Sigmoid colon (tissue), 7 donors: ENCODE measurements at regions of chr11 and their contacts with region 1.

Region 1: DNA sequence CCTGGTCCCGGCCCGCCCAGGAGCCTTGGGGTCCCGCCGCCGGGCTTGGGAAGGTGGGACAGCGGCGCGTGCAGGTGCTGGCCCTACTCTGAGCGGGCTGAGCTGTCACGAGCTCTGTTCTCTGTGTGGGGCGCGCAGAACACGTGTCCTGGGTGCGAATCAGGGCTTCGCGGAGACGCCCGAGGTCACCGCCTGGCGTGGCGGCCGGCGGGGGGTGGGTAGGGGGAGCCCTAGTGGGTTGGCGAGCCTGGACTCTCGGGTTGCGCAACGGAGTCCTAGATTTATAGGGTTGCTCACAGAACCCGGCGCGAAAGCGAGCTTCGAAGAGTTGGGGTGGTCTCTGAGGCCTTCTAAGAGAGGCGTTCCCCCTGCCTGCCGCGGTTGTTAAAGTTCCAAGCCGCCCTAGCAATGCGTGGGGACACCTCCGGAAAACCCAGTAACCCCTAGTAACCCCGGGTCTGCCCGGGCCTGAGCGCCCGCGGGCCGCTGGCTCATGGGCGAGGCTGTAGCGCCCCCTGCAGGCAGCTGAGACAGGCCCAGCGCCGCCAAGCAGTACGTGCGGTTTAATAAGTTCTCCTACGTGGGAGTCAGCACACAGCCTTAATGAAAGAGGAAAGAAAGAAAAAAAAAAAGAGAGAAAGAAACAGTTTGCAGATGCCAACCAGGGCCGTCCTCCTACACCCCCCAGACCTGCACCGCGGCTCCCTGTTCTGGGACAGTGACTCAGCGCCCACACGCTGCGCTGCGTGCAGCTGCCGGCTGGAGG is 2.8 kb downstream of the ADM start:
- DNase-seq: peak; percentile 95
- H3K4me3 ChIP-seq: peak overlapping the region; percentile 65 to 82 (median 71)
- H3K27ac ChIP-seq: peak overlapping the region; percentile 84 to 97 (median 94)
- H3K4me1 ChIP-seq: peaks cover 0 to 59% (median 48%) of the 10 kb centered on the region in 4 donors
- H3K27me3 ChIP-seq: no peaks in the 10 kb centered on the region
- CTCF ChIP-seq: peak; percentile 97 to 99 (median 99)
- EP300 ChIP-seq: no peak
- POLR2A ChIP-seq: peak in 1 of 2 donors; percentile 37

Region 2: DNA sequence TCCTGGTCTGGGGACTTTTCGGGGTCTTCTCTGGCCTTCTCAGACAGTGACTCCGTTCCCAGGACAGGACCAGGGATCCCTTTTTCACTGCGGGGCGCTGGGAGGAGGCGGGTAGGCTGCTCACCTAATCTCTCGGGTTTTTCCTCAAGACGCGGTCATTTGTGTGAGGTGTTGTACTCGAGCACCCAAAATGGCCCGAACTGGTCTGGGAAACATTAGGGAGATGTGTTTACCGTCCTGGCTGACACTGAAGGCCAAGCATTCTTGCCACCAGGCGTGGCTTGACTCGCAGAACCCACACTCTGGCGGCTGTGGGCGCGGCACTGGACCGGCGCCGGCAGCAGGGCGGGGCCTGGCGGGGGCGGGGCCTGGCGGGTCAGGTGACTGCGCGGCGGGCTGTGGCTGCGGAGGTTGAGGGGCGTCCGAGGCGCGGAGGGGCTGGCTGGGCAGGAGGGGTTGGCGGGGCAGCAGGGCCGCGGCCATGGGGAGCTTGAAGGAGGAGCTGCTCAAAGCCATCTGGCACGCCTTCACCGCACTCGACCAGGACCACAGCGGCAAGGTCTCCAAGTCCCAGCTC is 643.8 kb before region 1 on chr11 and contains the start of gene SWAP70:
- intact Hi-C with region 1: loop called (anchors 5 kb)
- DNase-seq: peak; percentile 95
- H3K4me3 ChIP-seq: peak within 1 kb of the TSS; percentile 69 to 99 (median 84)
- H3K27ac ChIP-seq: peak within 1 kb of the TSS; percentile 86 to 99 (median 93)
- H3K4me1 ChIP-seq: peaks cover 0 to 16% (median 5%) of the 10 kb centered on the region in 4 donors
- H3K27me3 ChIP-seq: no peaks in the 10 kb centered on the region
- CTCF ChIP-seq: peak; percentile 59 to 84 (median 72)
- EP300 ChIP-seq: no peak
- POLR2A ChIP-seq: peak; percentile 21 to 37
- total RNA-seq, gene SWAP70: 22.1 to 30.3 (median 28.6) TPM

Region 3: GRCh38 chr11:9861860-9862725 is 445.5 kb before region 1 on chr11:
- intact Hi-C with region 1: loop called (anchors 5 kb)
- DNase-seq: peak; percentile 74
- H3K4me3 ChIP-seq: no peak overlapping the region
- H3K27ac ChIP-seq: no peak overlapping the region
- H3K4me1 ChIP-seq: peaks cover 0 to 12% (median 7%) of the 10 kb centered on the region in 4 donors
- H3K27me3 ChIP-seq: no peaks in the 10 kb centered on the region
- CTCF ChIP-seq: peak; percentile 11 to 60 (median 57)
- EP300 ChIP-seq: no peak
- POLR2A ChIP-seq: no peak

Region 4: DNA sequence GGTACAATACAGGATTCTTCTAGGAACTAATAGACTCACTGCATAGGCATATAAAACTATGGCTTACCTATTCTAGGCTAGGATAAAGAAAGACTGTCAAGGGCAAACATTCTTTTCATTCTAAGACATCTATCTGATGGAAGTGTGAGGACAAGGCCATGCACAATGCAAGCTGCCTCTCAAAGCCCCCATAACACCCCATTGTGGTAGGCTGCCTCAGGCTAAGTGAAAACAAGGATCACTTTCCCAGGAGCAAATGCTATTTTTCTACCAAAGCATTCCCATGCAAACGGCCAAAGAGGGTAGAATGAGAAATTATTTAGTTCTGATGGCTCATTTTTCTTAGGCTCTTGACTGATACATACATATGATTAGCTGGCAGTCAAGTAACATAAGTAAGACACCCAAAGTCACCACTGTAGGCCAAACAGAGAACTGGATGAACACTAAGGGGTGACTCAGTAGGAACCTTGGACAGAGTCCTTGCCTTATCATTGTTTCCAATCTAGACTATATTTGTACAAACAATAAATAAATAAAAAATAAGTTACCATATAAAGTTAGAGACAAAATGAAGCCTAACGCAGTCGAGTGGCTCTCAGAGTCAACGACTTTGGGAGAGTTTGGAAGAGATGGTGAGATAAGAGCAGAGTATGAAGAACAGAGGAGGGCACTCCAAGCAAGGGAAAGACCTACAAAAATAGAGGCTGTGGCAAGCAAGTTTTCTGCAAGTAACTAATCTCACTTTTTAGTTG is 317.2 kb before region 1 on chr11:
- intact Hi-C with region 1: loop called (anchors 5 kb)
- DNase-seq: no peak
- H3K4me3 ChIP-seq: no peak overlapping the region
- H3K27ac ChIP-seq: no peak overlapping the region
- H3K4me1 ChIP-seq: no peaks in the 10 kb centered on the region
- H3K27me3 ChIP-seq: no peaks in the 10 kb centered on the region
- CTCF ChIP-seq: peak in 1 of 4 experiments; percentile 14
- EP300 ChIP-seq: no peak
- POLR2A ChIP-seq: no peak

Region 5: GRCh38 chr11:10208131-10208575 is 99.5 kb before region 1 on chr11:
- intact Hi-C with region 1: loop called (anchors 1 kb)
- DNase-seq: no peak
- H3K4me3 ChIP-seq: no peak overlapping the region
- H3K27ac ChIP-seq: peak overlapping the region in 1 of 4 donors; percentile 30
- H3K4me1 ChIP-seq: peaks cover 0 to 7% (median 2%) of the 10 kb centered on the region in 4 donors
- H3K27me3 ChIP-seq: no peaks in the 10 kb centered on the region
- CTCF ChIP-seq: peak; percentile 50 to 76 (median 72)
- EP300 ChIP-seq: no peak
- POLR2A ChIP-seq: no peak